Activated CD4-positive, alpha-beta T cell treated with anti-CD3 and anti-CD28 coated beads for 36 hours (primary cell): ENCODE measurements at regions of chr11 and their contacts with region 1.

Region 1: DNA sequence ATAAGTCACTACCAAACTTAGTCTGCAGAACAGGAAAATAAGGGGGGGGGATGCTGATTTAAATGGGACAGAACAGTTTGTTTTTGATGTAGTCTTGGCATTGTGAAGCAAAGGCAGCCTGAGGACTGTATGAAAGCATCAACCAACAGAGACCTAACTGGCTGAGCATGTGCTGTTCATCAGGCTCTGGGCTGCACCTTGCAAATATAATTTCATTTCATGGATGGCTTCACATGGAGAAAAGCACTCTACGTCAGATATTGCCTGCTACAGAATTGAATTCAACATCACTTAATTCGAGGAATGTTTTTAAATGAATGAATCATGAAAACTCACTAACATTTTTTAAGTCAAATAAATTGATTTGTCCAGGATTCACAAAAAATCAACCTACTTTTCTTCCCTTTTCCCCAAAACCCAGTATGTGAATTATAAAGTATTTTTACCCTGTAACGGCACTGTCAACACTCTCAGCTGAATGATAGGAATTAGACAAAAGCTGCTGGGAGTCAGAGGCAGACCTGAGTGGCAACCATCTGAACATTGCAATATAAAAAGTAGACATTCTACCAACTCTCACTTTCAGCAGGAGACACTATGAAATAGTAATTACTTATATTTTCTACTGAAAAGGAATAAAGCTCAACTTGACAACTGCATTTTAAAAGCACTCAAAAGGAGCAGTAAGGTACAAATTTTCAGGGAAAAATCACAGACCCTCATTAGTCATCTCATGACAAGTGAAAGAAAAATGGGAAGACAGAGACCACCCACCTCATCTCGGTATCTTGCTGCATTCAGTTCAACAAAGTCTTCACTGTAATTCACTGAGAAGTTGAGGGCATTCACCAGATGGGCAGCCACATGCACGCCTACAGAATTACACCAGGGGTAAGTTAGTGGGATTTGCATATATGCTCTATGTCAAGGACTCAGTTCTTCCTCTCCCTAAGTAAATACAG is 47.5 kb downstream of the NOX4 start:
- DNase-seq: no peak
- ATAC-seq: no peak
- H3K4me3 Mint-ChIP-seq: no peak overlapping the region
- H3K27ac Mint-ChIP-seq: no peak overlapping the region
- H3K4me1 Mint-ChIP-seq: no peaks in the 10 kb centered on the region
- H3K27me3 Mint-ChIP-seq: no peaks in the 10 kb centered on the region

Region 2: DNA sequence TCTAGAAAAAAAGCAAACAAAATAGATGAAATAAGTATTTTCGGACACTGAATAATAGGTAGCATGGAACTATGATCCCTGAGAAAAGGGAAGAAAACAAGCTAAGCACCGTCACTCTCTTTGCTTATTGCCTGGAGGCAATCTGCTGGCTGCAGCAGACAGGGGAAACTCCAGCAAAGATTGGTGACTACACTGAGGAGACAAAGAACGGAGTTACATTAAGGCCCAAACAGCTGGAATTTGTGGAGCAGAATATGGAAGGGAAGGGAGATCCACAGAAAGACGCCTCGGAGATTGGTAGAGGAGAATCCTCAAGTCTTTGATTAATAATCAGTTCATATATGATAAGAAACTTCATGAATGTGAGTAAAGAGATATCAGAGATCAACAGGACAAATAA is 115.8 kb before region 1 on chr11:
- CTCF ChIA-PET with region 1: no interaction called
- POLR2A ChIA-PET with region 1: no interaction called
- intact Hi-C with region 1: no loop called
- DNase-seq: no peak
- ATAC-seq: no peak
- H3K4me3 Mint-ChIP-seq: no peak overlapping the region
- H3K27ac Mint-ChIP-seq: no peak overlapping the region
- H3K4me1 Mint-ChIP-seq: no peaks in the 10 kb centered on the region
- H3K27me3 Mint-ChIP-seq: peaks cover 2% of the 10 kb centered on the region

Region 3: GRCh38 chr11:89477175-89477574 is 33.5 kb after region 1 on chr11:
- CTCF ChIA-PET with region 1: no interaction called
- POLR2A ChIA-PET with region 1: no interaction called
- intact Hi-C with region 1: no loop called
- DNase-seq: no peak
- ATAC-seq: no peak
- H3K4me3 Mint-ChIP-seq: no peak overlapping the region
- H3K27ac Mint-ChIP-seq: no peak overlapping the region
- H3K4me1 Mint-ChIP-seq: no peaks in the 10 kb centered on the region
- H3K27me3 Mint-ChIP-seq: no peaks in the 10 kb centered on the region

Region 4: DNA sequence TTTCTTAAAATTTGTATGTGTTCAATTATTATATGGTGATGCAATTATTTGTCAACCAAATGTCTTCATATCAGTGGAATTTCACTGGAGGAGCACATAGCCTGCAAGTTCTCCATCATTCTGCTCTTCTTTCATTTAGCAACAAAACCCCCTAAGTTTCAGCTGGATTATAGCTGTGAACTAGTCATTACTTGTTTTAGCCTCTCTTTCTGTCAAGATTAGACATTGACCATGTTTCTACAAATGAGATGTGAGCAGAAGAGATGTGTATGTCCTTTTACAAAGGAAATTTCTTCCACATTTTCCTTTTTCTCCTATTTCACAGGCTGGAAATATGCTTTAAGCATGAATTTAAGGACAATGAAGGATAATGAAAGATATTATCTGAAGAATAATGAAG is 56.7 kb after region 1 on chr11:
- CTCF ChIA-PET with region 1: no interaction called
- POLR2A ChIA-PET with region 1: no interaction called
- intact Hi-C with region 1: loop called in 1 of 2 experiments (anchors 10 kb)
- DNase-seq: no peak
- ATAC-seq: no peak
- H3K4me3 Mint-ChIP-seq: no peak overlapping the region
- H3K27ac Mint-ChIP-seq: no peak overlapping the region
- H3K4me1 Mint-ChIP-seq: no peaks in the 10 kb centered on the region
- H3K27me3 Mint-ChIP-seq: no peaks in the 10 kb centered on the region

Region 5: DNA sequence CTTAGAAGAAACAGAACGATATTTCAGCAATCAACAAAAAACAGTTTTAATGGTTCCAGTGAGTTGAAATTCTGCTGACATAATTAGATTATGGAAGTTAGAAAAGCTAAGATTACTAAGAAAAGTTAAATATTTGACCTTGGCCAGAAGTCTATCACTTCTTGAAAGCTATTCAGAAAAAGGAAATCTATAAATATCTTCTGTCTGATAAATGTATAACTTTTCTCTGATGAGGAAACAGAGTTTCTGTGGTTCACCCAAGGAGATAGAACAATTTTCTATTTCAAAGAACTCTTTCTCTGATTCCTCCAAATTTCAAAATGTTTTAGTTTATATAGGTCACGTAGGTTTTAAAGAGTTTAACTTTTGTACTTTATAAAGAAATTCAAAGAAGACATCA is 1217.6 kb after region 1 on chr11:
- CTCF ChIA-PET with region 1: no interaction called
- POLR2A ChIA-PET with region 1: no interaction called
- intact Hi-C with region 1: no loop called
- DNase-seq: no peak
- ATAC-seq: no peak
- H3K4me3 Mint-ChIP-seq: no peak overlapping the region
- H3K27ac Mint-ChIP-seq: no peak overlapping the region
- H3K4me1 Mint-ChIP-seq: no peaks in the 10 kb centered on the region
- H3K27me3 Mint-ChIP-seq: no peaks in the 10 kb centered on the region